ENCODE measurements at regions of chr20 and their contacts with region 1.

Region 1: GRCh38 chr20:11047559-11047958 is 373.8 kb upstream of the JAG1 start:
- DNase-seq: no peak
- H3K4me3 ChIP-seq: no peak overlapping the region
- H3K27ac ChIP-seq: no peak overlapping the region
- H3K4me1 ChIP-seq: peaks cover 0 to 7% (median 0%) of the 10 kb centered on the region in 4 donors
- H3K27me3 ChIP-seq: no peaks in the 10 kb centered on the region
- CTCF ChIP-seq: no peak
- EP300 ChIP-seq: no peak
- POLR2A ChIP-seq: no peak

Region 2: GRCh38 chr20:11012975-11013374 is 34.6 kb before region 1 on chr20:
- in situ Hi-C with region 1: no loop called
- intact Hi-C with region 1: no loop called
- DNase-seq: no peak
- H3K4me3 ChIP-seq: no peak overlapping the region
- H3K27ac ChIP-seq: peak overlapping the region; percentile 8 to 40 (median 26)
- H3K4me1 ChIP-seq: peaks cover 0 to 8% (median 3%) of the 10 kb centered on the region in 4 donors
- H3K27me3 ChIP-seq: no peaks in the 10 kb centered on the region
- CTCF ChIP-seq: no peak
- EP300 ChIP-seq: peak; percentile 38
- POLR2A ChIP-seq: no peak

Region 3: DNA sequence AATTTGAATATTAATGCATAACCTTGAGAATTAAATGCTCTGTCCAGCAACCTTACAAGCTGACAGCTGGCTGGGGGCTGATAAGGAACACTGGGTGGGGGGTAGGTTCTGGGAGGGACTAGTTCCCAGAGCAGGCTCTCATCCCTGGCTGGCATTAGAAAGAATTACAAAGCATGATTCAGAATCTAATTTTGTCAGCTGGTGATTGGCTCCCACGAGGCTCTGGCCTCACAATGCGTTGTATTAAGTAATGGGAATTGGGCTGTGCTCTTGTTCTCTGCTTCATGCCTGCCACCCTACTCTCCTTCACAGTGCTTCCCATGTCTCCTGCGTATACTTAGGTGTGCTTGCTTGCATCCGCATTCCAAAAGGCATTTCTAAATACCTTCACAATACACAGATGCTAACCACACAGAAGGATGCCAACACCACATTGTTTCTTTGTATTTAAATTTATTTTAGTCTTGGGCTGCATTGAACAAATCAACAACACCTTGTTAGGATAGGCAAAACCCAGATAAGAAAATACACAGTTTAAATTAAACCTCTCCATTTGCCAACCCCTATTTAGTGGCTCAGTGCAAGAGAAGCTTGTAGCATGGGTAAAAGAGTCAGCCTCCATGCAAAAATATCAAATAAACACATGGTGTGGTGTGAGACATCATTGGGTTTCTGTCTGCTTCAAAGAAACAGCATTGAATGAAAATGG is 60.7 kb after region 1 on chr20:
- in situ Hi-C with region 1: loop called in 1 of 4 experiments (anchors 10 kb)
- intact Hi-C with region 1: no loop called
- DNase-seq: no peak
- H3K4me3 ChIP-seq: no peak overlapping the region
- H3K27ac ChIP-seq: no peak overlapping the region
- H3K4me1 ChIP-seq: no peaks in the 10 kb centered on the region
- H3K27me3 ChIP-seq: no peaks in the 10 kb centered on the region
- CTCF ChIP-seq: no peak
- EP300 ChIP-seq: no peak
- POLR2A ChIP-seq: no peak

Region 4: GRCh38 chr20:11229772-11230171 is 182.2 kb after region 1 on chr20:
- in situ Hi-C with region 1: no loop called
- intact Hi-C with region 1: no loop called
- DNase-seq: peak; percentile 8
- H3K4me3 ChIP-seq: no peak overlapping the region
- H3K27ac ChIP-seq: peak overlapping the region in 1 of 4 donors; percentile 33
- H3K4me1 ChIP-seq: peaks cover 0 to 5% (median 0%) of the 10 kb centered on the region in 4 donors
- H3K27me3 ChIP-seq: no peaks in the 10 kb centered on the region
- CTCF ChIP-seq: no peak
- EP300 ChIP-seq: no peak
- POLR2A ChIP-seq: no peak

Region 5: GRCh38 chr20:11454966-11455799 is 407.6 kb after region 1 on chr20:
- in situ Hi-C with region 1: no loop called
- intact Hi-C with region 1: no loop called
- DNase-seq: peak; percentile 17
- H3K4me3 ChIP-seq: peak overlapping the region in 1 of 4 donors; percentile 13
- H3K27ac ChIP-seq: peak overlapping the region; percentile 24 to 62 (median 45)
- H3K4me1 ChIP-seq: peaks cover 0 to 34% (median 14%) of the 10 kb centered on the region in 4 donors
- H3K27me3 ChIP-seq: no peaks in the 10 kb centered on the region
- CTCF ChIP-seq: no peak
- EP300 ChIP-seq: no peak
- POLR2A ChIP-seq: no peak

Measured in transverse colon (tissue), 4 donors.